ENCODE measurements at regions of chr6 and their contacts with region 1.

Region 1: DNA sequence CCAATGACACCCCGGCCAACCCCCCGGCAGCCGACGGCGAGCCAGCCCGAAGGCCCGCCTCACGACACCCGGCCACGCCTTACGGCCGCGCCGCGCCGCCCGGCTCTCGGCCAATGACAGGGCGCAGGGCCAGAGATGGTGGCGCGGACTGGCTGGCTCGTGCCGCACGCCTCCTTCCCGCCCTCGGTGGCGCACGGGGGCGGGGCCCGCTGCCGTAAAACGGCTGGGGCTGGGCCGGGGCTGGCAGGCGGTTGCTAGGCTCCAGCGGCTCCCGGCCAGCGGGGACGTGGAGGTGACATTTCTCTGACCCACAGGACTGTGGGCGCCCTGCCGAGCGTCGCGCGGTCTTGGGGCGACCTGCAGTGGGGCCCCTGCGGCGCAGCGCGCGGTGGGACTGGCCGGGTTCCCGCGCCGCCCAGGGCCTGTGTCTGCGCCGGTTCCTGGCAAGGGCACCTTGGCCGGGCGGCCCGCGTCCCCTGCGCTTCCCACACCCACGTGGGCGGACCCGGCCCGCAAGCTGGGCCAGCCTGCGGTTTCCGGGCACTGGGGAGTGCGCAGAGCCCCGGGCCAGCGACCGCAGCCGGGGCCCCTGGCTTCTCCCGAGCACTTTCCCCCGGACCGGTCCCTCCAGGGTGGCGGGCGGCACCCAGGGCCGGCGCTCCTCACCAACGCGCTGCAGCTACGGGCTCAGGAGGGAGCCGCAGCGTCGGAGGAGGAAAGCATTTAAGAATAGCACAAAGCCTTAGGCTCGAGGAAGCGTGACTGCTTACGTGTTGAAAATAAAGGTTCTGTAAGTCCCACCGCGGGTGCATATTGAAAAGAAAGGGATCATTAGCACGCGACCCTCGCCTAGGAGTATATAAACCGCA is at the start of gene MPC1:
- DNase-seq: peak; percentile 85
- ATAC-seq: peak; percentile 88
- H3K4me3 ChIP-seq: peak within 1 kb of the TSS; percentile 70 to 74
- H3K27ac ChIP-seq: peak within 1 kb of the TSS; percentile 95
- H3K4me1 ChIP-seq: peaks cover 4 to 17% of the 10 kb centered on the region in 2 experiments; a peak in 3 of 4 replicates
- H3K27me3 ChIP-seq: no peaks in the 10 kb centered on the region
- CTCF ChIP-seq: no peak
- POLR2A ChIP-seq: peak; percentile 49
- RAD21 ChIP-seq: no peak
- total RNA-seq, gene MPC1: 15.9 TPM

Region 2: DNA sequence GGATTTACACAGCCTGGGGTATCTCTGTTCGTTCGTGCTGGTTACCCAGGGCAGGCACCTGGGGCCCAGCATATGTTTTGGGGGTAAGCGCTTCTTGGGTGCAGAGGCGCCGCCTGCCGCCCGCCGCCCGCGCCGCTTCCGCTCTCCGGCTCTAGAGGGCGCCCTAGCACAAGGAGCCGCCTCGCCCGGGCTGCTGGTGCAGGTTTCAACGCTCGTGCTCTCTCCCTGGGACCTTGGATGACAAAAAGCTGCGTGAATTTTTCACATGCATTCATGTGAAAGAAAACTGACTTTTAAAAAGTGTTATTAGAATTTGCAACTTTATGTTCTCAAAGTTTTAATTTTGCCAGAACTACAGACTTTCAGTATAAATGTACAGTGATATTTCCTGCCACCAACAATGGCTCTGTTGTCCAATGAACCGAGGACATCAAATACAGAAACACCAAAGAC is 107.4 kb before region 1 on chr6:
- CTCF ChIA-PET with region 1: interaction called, 4 read pairs
- POLR2A ChIA-PET with region 1: no interaction called
- RAD21 ChIA-PET with region 1: no interaction called
- intact Hi-C with region 1: loop called (anchors 5 kb)
- DNase-seq: no peak
- ATAC-seq: peak; percentile 97
- H3K4me3 ChIP-seq: no peak overlapping the region
- H3K27ac ChIP-seq: no peak overlapping the region
- H3K4me1 ChIP-seq: peaks cover 0 to 4% of the 10 kb centered on the region in 2 experiments; a peak in 1 of 4 replicates
- H3K27me3 ChIP-seq: no peaks in the 10 kb centered on the region
- CTCF ChIP-seq: peak; percentile 98 to 99 (median 99)
- POLR2A ChIP-seq: no peak
- RAD21 ChIP-seq: peak; percentile 97

Region 3: GRCh38 chr6:166313255-166314070 is 69.7 kb before region 1 on chr6:
- CTCF ChIA-PET with region 1: interaction called, 4 read pairs
- POLR2A ChIA-PET with region 1: no interaction called
- RAD21 ChIA-PET with region 1: no interaction called
- intact Hi-C with region 1: loop called (anchors 2 kb)
- DNase-seq: peak; percentile 53
- ATAC-seq: peak; percentile 98
- H3K4me3 ChIP-seq: no peak overlapping the region
- H3K27ac ChIP-seq: no peak overlapping the region
- H3K4me1 ChIP-seq: peaks cover 0 to 8% of the 10 kb centered on the region in 2 experiments; a peak in 2 of 4 replicates
- H3K27me3 ChIP-seq: no peaks in the 10 kb centered on the region
- CTCF ChIP-seq: peak; percentile 80 to 85 (median 85)
- POLR2A ChIP-seq: no peak
- RAD21 ChIP-seq: peak; percentile 79

Region 4: GRCh38 chr6:166342349-166343149 is 40.6 kb before region 1 on chr6 and contains the start of gene SFT2D1:
- CTCF ChIA-PET with region 1: no interaction called
- POLR2A ChIA-PET with region 1: no interaction called
- RAD21 ChIA-PET with region 1: no interaction called
- intact Hi-C with region 1: loop called (anchors 1 kb)
- DNase-seq: peak; percentile 36
- ATAC-seq: peak; percentile 96
- H3K4me3 ChIP-seq: peak within 1 kb of the TSS; percentile 98 to 100
- H3K27ac ChIP-seq: peak within 1 kb of the TSS; percentile 73
- H3K4me1 ChIP-seq: peaks cover 0 to 17% of the 10 kb centered on the region in 2 experiments; a peak in 3 of 4 replicates
- H3K27me3 ChIP-seq: no peaks in the 10 kb centered on the region
- CTCF ChIP-seq: no peak
- POLR2A ChIP-seq: no peak
- RAD21 ChIP-seq: no peak
- total RNA-seq, gene SFT2D1: 65.6 TPM

Region 5: GRCh38 chr6:166728957-166729441 is 345.8 kb after region 1 on chr6:
- CTCF ChIA-PET with region 1: no interaction called
- POLR2A ChIA-PET with region 1: no interaction called
- RAD21 ChIA-PET with region 1: no interaction called
- intact Hi-C with region 1: no loop called
- DNase-seq: no peak
- ATAC-seq: 0 out of 2 replicates have a peak, but pooled peaks have one; percentile 14
- H3K4me3 ChIP-seq: no peak overlapping the region
- H3K27ac ChIP-seq: no peak overlapping the region
- H3K4me1 ChIP-seq: peaks cover 0 to 10% of the 10 kb centered on the region in 2 experiments; a peak in 1 of 4 replicates
- H3K27me3 ChIP-seq: no peaks in the 10 kb centered on the region
- CTCF ChIP-seq: no peak
- POLR2A ChIP-seq: no peak
- RAD21 ChIP-seq: no peak

Measured in HCT116 (cell line).